Tibial artery (tissue), 4 donors: ENCODE measurements at regions of chr20 and their contacts with region 1.

Region 1: GRCh38 chr20:38222231-38222922 is 38.2 kb downstream of the KIAA1755 start:
- DNase-seq: peak; percentile 61 to 77
- H3K4me3 ChIP-seq: no peak overlapping the region
- H3K27ac ChIP-seq: no peak overlapping the region
- H3K4me1 ChIP-seq: peaks cover 0 to 17% (median 13%) of the 10 kb centered on the region in 4 donors
- H3K27me3 ChIP-seq: no peaks in the 10 kb centered on the region
- CTCF ChIP-seq: peak; percentile 89 to 93

Region 2: GRCh38 chr20:38059832-38060231 is 162.5 kb before region 1 on chr20:
- intact Hi-C with region 1: loop called (anchors 2 kb)
- DNase-seq: no peak
- H3K4me3 ChIP-seq: no peak overlapping the region
- H3K27ac ChIP-seq: no peak overlapping the region
- H3K4me1 ChIP-seq: peaks cover 0 to 4% (median 0%) of the 10 kb centered on the region in 4 donors
- H3K27me3 ChIP-seq: no peaks in the 10 kb centered on the region
- CTCF ChIP-seq: no peak

Region 3: GRCh38 chr20:38173237-38174156 is 48.9 kb before region 1 on chr20:
- intact Hi-C with region 1: loop called (anchors 5 kb)
- DNase-seq: peak; percentile 80 to 91
- H3K4me3 ChIP-seq: no peak overlapping the region
- H3K27ac ChIP-seq: peak overlapping the region in 1 of 2 donors; percentile 84
- H3K4me1 ChIP-seq: peaks cover 0 to 51% (median 36%) of the 10 kb centered on the region in 4 donors
- H3K27me3 ChIP-seq: no peaks in the 10 kb centered on the region
- CTCF ChIP-seq: no peak

Region 4: GRCh38 chr20:38725931-38726803 is 503.8 kb after region 1 on chr20:
- intact Hi-C with region 1: no loop called
- DNase-seq: no peak
- H3K4me3 ChIP-seq: no peak overlapping the region
- H3K27ac ChIP-seq: no peak overlapping the region
- H3K4me1 ChIP-seq: peaks cover 0 to 59% (median 41%) of the 10 kb centered on the region in 4 donors
- H3K27me3 ChIP-seq: peaks cover 10 to 100% of the 10 kb centered on the region in 2 donors
- CTCF ChIP-seq: peak; percentile 24 to 27